WTC11 (cell line): ENCODE measurements at regions of chr20 and their contacts with region 1.

Region 1: GRCh38 chr20:36605399-36606157 is at the start of gene RAB5IF:
- DNase-seq: peak; percentile 100
- ATAC-seq: peak; percentile 91
- H3K4me3 Mint-ChIP-seq: peak within 1 kb of the TSS; percentile 97
- H3K27ac Mint-ChIP-seq: peak within 1 kb of the TSS; percentile 94
- H3K4me1 Mint-ChIP-seq: peaks cover 17% of the 10 kb centered on the region
- H3K27me3 Mint-ChIP-seq: no peaks in the 10 kb centered on the region; the same call in 1 of the 2 replicates
- CTCF ChIP-seq: peak; percentile 82
- total RNA-seq, gene RAB5IF: 83.2 to 89.4 TPM (median 88.4 TPM) in 3 replicates

Region 2: GRCh38 chr20:36541227-36541763 is 64.3 kb before region 1 on chr20 and contains the start of gene MYL9:
- CTCF ChIA-PET with region 1: interaction called, 19 read pairs
- POLR2A ChIA-PET with region 1: interaction called, 4 read pairs
- DNase-seq: peak; percentile 82
- ATAC-seq: peak; percentile 56
- H3K4me3 Mint-ChIP-seq: peak within 1 kb of the TSS; percentile 62
- H3K27ac Mint-ChIP-seq: peak within 1 kb of the TSS; percentile 77; the same call in 1 of the 2 replicates
- H3K4me1 Mint-ChIP-seq: peaks cover 44% of the 10 kb centered on the region
- H3K27me3 Mint-ChIP-seq: no peaks in the 10 kb centered on the region
- CTCF ChIP-seq: no peak
- total RNA-seq, gene MYL9: 52.5 to 57.7 TPM (median 54.7 TPM) in 3 replicates

Region 3: GRCh38 chr20:36562724-36563123 is 42.9 kb before region 1 on chr20:
- CTCF ChIA-PET with region 1: interaction called, 14 read pairs
- POLR2A ChIA-PET with region 1: no interaction called
- DNase-seq: no peak
- ATAC-seq: peak; percentile 78
- H3K4me3 Mint-ChIP-seq: no peak overlapping the region
- H3K27ac Mint-ChIP-seq: peak overlapping the region; percentile 93
- H3K4me1 Mint-ChIP-seq: peaks cover 25% of the 10 kb centered on the region
- H3K27me3 Mint-ChIP-seq: peaks cover 4% of the 10 kb centered on the region
- CTCF ChIP-seq: no peak

Region 4: GRCh38 chr20:36585463-36586108 is 20.0 kb before region 1 on chr20:
- CTCF ChIA-PET with region 1: interaction called, 22 read pairs
- POLR2A ChIA-PET with region 1: interaction called, 7 read pairs
- DNase-seq: peak; percentile 63
- ATAC-seq: peak; percentile 88
- H3K4me3 Mint-ChIP-seq: peak overlapping the region; percentile 46
- H3K27ac Mint-ChIP-seq: peak overlapping the region; percentile 97
- H3K4me1 Mint-ChIP-seq: peaks cover 51% of the 10 kb centered on the region
- H3K27me3 Mint-ChIP-seq: no peaks in the 10 kb centered on the region
- CTCF ChIP-seq: no peak

Region 5: GRCh38 chr20:36632487-36633284 is 27.1 kb after region 1 on chr20:
- CTCF ChIA-PET with region 1: interaction called, 18 read pairs
- POLR2A ChIA-PET with region 1: no interaction called
- DNase-seq: peak; percentile 70
- ATAC-seq: peak; percentile 95
- H3K4me3 Mint-ChIP-seq: no peak overlapping the region
- H3K27ac Mint-ChIP-seq: no peak overlapping the region
- H3K4me1 Mint-ChIP-seq: 0 out of 2 replicates have a peak, but pooled peaks cover 3% of the 10 kb centered on the region
- H3K27me3 Mint-ChIP-seq: no peaks in the 10 kb centered on the region; the same call in 1 of the 2 replicates
- CTCF ChIP-seq: no peak

Region 6: DNA sequence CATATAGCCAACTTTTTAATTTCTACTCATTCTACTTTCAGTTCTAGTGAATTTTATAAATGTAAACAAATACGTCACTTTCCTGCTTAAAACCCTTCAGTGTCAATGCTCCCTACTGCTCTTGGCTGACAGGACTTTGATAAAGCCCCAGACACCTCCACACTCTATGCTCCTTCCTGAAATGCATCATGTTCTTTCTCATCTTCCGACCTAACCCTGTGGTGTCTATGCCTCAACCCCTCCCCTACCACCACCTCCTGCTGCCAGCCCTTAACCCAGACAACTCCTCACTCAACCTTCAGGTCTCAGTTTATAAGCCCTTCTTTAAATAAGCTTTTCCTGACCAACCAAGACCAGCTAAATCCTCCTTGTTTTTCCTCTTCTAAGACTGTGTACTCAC is 289.5 kb after region 1 on chr20:
- CTCF ChIA-PET with region 1: no interaction called
- POLR2A ChIA-PET with region 1: no interaction called
- DNase-seq: no peak
- ATAC-seq: no peak
- H3K4me3 Mint-ChIP-seq: no peak overlapping the region
- H3K27ac Mint-ChIP-seq: no peak overlapping the region
- H3K4me1 Mint-ChIP-seq: peaks cover under 1% of the 10 kb centered on the region; the same call in 1 of the 2 replicates
- H3K27me3 Mint-ChIP-seq: no peaks in the 10 kb centered on the region
- CTCF ChIP-seq: no peak